BJ (cell line): ENCODE measurements at regions of chr4 and their contacts with region 1.

Region 1: DNA sequence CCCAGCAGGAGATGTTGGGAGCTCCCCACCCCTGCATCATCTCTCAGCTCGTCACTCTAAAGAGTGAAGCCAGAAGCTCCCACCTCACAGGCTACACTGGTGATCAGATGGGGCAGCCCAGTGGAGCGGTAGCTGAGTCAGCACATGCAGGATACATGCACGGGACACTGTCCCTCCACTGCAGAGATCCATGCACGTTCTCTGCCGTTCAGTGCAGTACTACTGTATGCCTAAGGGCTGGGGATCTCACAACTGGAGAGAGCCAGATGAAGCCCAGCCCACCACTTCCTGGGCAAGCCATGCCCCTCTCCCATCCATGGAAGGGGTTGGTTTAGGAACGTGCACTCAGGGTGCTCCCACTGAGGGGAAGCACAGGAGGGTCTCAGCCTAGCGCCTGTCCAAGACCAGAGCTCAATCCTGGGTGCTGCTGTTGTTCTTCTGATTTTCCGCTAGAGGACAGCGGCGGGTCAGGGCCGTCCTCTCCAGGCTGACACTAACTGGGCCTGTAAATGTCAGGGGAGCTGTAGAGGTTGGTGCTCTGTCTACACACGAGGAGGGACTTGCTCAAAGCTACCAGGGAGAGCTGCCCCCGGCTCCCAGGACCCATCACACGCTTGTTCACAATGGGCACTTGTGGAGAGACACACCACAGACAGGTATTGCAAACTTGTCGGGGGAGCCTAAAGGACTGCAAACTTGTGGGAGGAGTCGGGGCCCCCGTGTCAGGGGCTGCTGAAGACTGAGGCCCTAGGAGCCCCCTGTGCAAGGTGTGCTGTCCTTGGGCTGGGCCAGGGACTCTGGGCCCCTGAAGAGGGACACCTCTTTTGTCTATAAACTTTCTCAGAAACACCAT is 18.2 kb upstream of the ABLIM2 start:
- DNase-seq: no peak
- H3K4me3 ChIP-seq: no peak overlapping the region
- H3K27me3 ChIP-seq: peaks cover 18% of the 10 kb centered on the region
- CTCF ChIP-seq: peak; percentile 94

Region 2: GRCh38 chr4:7186061-7186461 is 990.7 kb before region 1 on chr4:
- CTCF ChIA-PET with region 1: no interaction called
- POLR2A ChIA-PET with region 1: no interaction called
- DNase-seq: no peak
- H3K4me3 ChIP-seq: no peak overlapping the region
- H3K27me3 ChIP-seq: peaks cover 19% of the 10 kb centered on the region
- CTCF ChIP-seq: peak; percentile 38

Region 3: GRCh38 chr4:7960790-7961655 is 215.8 kb before region 1 on chr4:
- CTCF ChIA-PET with region 1: no interaction called
- POLR2A ChIA-PET with region 1: no interaction called
- DNase-seq: peak; percentile 95
- H3K4me3 ChIP-seq: no peak overlapping the region
- H3K27me3 ChIP-seq: peaks cover 4% of the 10 kb centered on the region; the same call in 1 of the 2 replicates
- CTCF ChIP-seq: no peak

Region 4: GRCh38 chr4:8058031-8058479 is 118.7 kb before region 1 on chr4:
- CTCF ChIA-PET with region 1: no interaction called
- POLR2A ChIA-PET with region 1: no interaction called
- DNase-seq: no peak
- H3K4me3 ChIP-seq: no peak overlapping the region
- H3K27me3 ChIP-seq: peaks cover 4% of the 10 kb centered on the region
- CTCF ChIP-seq: no peak

Region 5: DNA sequence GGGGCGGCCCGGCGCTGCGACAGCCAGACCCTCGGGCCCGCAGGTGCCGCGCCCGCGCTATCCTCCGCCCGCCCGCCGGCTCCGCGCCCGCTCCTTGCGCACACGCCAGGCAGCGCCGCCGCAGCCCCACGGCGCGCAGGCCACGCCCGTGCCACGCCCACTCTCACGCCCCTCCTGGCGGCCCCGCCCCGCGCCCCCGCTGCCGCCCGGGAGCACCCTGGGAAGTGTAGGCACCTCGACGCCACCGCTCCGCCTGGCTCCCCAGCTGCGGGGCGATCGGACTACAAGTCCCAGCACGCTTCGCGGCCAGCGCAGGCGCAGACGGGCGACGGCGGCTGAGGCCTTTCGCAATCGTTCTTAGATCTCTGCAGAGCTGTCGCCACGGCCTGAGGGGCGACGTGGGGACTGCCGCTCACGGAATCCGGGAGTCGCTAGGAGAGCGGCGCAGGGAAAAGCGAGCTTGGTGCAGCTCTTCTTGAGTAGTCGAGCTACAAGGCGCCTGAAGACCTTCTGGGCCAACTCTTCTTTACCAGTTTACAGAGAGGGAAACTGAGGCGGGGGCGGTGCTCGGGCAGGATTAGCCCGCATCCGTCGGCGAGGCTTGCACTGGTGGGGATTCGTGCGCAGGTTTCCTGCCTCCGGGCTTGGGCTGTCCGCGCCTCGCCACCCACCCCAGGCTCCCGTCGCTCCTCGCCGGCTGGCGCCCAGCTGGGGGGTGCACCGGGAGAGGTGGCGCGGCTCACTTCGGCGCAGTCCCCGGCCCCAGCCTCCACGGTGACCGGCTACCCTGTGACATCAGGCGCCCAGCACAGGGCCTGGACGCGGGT is 17.9 kb before region 1 on chr4 and contains the start of gene ABLIM2:
- CTCF ChIA-PET with region 1: interaction called, 11 read pairs
- POLR2A ChIA-PET with region 1: no interaction called
- DNase-seq: peak; percentile 81
- H3K4me3 ChIP-seq: peak within 1 kb of the TSS; percentile 89
- H3K27me3 ChIP-seq: peaks cover 6% of the 10 kb centered on the region; the same call in 1 of the 2 replicates
- CTCF ChIP-seq: no peak
- polyA plus RNA-seq, gene ABLIM2: 0.07 TPM in 1 of 2 replicates, not detected in the other

Region 6: GRCh38 chr4:8198906-8199593 is 22.3 kb after region 1 on chr4 and contains the start of gene SH3TC1:
- CTCF ChIA-PET with region 1: interaction called, 23 read pairs
- POLR2A ChIA-PET with region 1: no interaction called
- DNase-seq: peak; percentile 34
- H3K4me3 ChIP-seq: peak within 1 kb of the TSS; percentile 31
- H3K27me3 ChIP-seq: peaks cover 7% of the 10 kb centered on the region
- CTCF ChIP-seq: no peak
- polyA plus RNA-seq, gene SH3TC1: 0.67 and 1.2 TPM in 2 replicates

Region 7: DNA sequence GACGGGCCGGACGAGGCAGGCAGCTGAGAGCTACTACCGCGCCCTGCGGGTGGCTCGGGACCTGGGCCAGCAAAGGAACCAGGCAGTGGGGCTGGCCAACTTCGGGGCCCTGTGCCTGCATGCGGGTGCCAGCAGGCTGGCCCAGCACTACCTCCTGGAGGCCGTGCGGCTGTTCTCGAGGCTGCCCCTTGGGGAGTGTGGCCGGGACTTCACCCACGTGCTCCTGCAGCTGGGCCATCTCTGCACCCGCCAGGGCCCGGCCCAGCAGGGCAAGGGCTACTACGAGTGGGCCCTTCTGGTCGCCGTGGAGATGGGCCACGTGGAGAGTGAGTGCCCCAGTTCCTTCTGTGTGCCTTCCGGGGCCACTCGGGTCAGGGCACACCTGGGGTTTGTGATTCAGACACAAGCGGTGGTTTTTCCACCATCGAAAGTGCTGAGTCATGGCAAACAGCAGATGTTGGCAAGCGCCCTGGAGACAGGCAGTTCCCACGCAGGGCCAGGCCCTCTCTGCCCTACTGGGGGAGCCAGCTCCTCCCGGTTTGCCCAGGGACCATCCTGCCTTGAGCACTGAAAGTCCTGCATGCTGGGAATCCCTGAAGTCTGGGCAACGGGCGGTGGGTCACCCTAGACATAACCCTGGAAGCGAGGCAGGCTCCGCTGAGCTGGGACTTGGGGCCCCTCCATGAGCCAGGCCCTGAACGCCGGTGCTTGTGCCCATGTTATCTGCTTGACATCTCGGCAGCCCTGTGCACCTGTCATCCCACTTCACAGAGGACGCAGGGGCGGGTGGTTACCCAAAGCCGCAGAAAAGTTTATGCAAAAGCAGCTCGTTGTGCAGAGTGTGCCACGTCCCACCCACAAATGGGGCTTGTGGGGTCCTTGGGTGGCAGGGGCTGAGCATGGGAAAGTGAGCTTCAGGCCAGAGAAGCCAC is 51.8 kb after region 1 on chr4:
- CTCF ChIA-PET with region 1: interaction called, 23 read pairs
- POLR2A ChIA-PET with region 1: no interaction called
- DNase-seq: peak; percentile 39
- H3K4me3 ChIP-seq: no peak overlapping the region
- H3K27me3 ChIP-seq: peaks cover 1% of the 10 kb centered on the region; the same call in 1 of the 2 replicates
- CTCF ChIP-seq: no peak

Region 8: DNA sequence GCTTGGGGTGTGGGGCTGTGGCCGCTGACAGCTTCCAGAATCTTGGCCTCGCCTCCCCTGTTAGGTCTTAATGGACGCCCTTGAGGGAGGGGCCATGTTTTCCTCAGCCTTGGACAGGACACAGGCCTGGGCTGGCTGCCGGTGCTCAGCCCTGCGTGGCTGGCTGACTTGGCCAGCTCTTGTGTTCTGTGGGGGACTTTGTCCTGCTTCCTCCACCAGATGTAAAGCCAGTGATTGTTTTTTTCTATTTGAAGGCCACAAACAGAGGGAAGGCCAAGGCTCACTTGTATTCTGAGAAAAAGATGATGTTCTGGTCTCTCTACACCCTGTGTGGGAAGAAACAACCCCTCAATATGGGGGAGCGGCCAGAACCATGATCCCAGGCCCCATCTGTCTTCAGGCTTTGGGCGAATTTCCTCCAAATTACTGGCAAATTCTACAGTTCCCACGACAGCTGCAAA is 164.0 kb after region 1 on chr4:
- CTCF ChIA-PET with region 1: no interaction called
- POLR2A ChIA-PET with region 1: no interaction called
- DNase-seq: no peak
- H3K4me3 ChIP-seq: no peak overlapping the region
- H3K27me3 ChIP-seq: no peaks in the 10 kb centered on the region
- CTCF ChIP-seq: no peak

Region 9: DNA sequence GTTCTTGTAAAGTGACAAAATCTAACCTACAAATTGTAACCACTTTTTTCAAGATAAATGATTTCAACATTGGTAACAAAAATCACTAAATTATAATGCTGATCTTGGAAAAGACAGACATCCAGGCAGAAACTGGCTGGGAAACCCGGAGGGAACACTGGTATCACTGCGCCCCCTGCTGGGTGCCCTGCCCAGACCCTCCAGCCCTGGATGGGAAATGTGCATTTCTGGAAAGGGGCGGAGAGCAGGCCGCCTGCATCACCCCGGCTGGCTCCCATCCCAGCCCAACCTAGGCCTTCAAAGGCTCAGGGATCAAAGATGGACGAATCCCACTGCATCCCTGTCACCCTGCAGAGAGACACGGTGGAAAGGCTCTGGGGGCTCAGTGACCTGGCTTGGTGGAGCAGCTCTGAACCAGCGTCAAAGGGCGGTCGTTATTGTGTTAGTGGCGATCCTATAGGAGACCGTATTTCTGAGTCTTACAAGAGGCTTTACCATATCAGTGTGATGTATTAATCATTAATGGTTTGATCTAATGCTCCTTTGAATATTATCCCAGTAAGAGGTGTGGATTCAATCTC is 226.5 kb after region 1 on chr4:
- CTCF ChIA-PET with region 1: interaction called, 29 read pairs
- POLR2A ChIA-PET with region 1: no interaction called
- DNase-seq: no peak
- H3K4me3 ChIP-seq: no peak overlapping the region
- H3K27me3 ChIP-seq: no peaks in the 10 kb centered on the region
- CTCF ChIP-seq: peak; percentile 92